Testis (tissue), 5 donors: ENCODE measurements at regions of chr6 and their contacts with region 1.

Region 1: GRCh38 chr6:2999618-3000557 is at the start of gene NQO2:
- DNase-seq: peak; percentile 95
- H3K4me3 ChIP-seq: peak within 1 kb of the TSS; percentile 75 to 76
- H3K27ac ChIP-seq: peak within 1 kb of the TSS; percentile 72 to 87
- H3K4me1 ChIP-seq: peaks cover 12% of the 10 kb centered on the region
- H3K27me3 ChIP-seq: no peaks in the 10 kb centered on the region
- CTCF ChIP-seq: peak in 1 of 3 experiments; percentile 3
- POLR2A ChIP-seq: peak; percentile 56
- total RNA-seq, gene NQO2: 9.5 to 16.8 TPM

Region 2: DNA sequence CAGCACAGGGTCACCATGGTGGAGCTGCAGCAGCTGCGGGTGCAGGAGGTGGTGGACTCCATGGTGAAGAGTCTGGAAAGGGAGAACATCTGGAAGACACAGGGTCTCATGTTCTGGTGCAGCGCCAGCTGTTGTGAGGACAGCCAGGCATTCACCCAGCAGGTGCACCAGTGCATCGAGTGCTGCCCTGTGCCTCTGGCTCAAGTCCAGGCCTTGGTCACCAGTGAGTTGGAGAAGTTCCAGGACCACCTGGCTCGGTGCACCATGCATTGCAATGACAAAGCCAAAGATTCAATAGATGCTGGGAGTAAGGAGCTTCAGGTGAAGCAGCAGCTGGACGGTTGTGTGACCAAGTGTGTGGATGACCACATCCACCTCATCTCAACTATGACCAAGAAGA is 45.5 kb after region 1 on chr6:
- intact Hi-C with region 1: loop called (anchors 5 kb)
- DNase-seq: no peak
- H3K4me3 ChIP-seq: no peak overlapping the region
- H3K27ac ChIP-seq: no peak overlapping the region
- H3K4me1 ChIP-seq: no peaks in the 10 kb centered on the region
- H3K27me3 ChIP-seq: no peaks in the 10 kb centered on the region
- CTCF ChIP-seq: no peak
- POLR2A ChIP-seq: no peak